Adrenal gland (tissue), 19 donors: ENCODE measurements at regions of chr7 and their contacts with region 1.

Region 1: GRCh38 chr7:35985126-35985754 is 167.8 kb upstream of the EEPD1 start:
- DNase-seq: peak; percentile 78 to 92 (median 88)
- H3K4me3 ChIP-seq: no peak overlapping the region
- H3K27ac ChIP-seq: no peak overlapping the region
- H3K4me1 ChIP-seq: no peaks in the 10 kb centered on the region
- H3K27me3 ChIP-seq: no peaks in the 10 kb centered on the region
- CTCF ChIP-seq: peak; percentile 84 to 99 (median 98)
- POLR2A ChIP-seq: no peak

Region 2: GRCh38 chr7:36037121-36037662 is 52.0 kb after region 1 on chr7:
- intact Hi-C with region 1: no loop called
- DNase-seq: peak; percentile 68 to 90 (median 86)
- H3K4me3 ChIP-seq: peak overlapping the region in 1 of 4 donors; percentile 15
- H3K27ac ChIP-seq: peak overlapping the region; percentile 58 to 88 (median 78)
- H3K4me1 ChIP-seq: peaks cover 11 to 23% of the 10 kb centered on the region in 2 donors
- H3K27me3 ChIP-seq: no peaks in the 10 kb centered on the region
- CTCF ChIP-seq: no peak
- POLR2A ChIP-seq: peak in 1 of 2 donors; percentile 21

Region 3: DNA sequence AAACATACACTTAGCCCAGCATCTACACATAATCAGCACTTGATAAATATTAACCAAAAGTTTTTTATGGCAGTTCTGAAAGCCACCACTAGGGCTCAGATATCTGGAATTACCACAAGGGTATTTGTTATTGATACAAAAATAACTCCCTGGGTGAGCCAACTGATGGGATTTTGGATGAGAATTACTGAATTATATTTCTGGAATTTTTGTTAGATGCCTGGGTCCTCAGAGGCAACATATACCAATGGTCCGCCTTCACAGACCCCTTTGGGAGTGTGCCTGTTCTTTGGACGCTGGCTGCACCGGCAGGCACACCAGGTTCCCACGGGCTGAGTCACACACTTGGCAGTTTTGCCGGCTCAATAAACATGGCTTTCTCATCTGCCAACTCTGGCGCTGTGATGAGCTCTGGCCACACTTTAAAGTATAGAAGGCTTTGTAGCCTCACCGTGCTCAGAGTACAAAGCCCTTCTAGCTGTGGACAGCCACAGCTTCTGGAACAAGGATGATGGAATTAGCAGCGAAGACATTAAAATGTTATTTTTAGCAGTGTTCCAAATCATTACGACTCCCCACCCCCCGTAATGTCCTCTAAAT is 143.3 kb after region 1 on chr7:
- intact Hi-C with region 1: loop called in 1 of 2 experiments (anchors 10 kb)
- DNase-seq: peak; percentile 75 to 89 (median 87)
- H3K4me3 ChIP-seq: peak overlapping the region in 1 of 4 donors; percentile 30
- H3K27ac ChIP-seq: peak overlapping the region in 2 of 5 donors; percentile 40 to 72
- H3K4me1 ChIP-seq: peaks cover 0 to 9% of the 10 kb centered on the region in 2 donors
- H3K27me3 ChIP-seq: no peaks in the 10 kb centered on the region
- CTCF ChIP-seq: peak; percentile 62 to 85 (median 82)
- POLR2A ChIP-seq: no peak

Region 4: GRCh38 chr7:36291387-36292316 is 306.4 kb after region 1 on chr7:
- intact Hi-C with region 1: loop called (anchors 2 kb)
- DNase-seq: peak; percentile 82 to 94 (median 88)
- H3K4me3 ChIP-seq: peak overlapping the region in 2 of 4 donors; percentile 11 to 46
- H3K27ac ChIP-seq: peak overlapping the region in 4 of 5 donors; percentile 84 to 94 (median 88)
- H3K4me1 ChIP-seq: peaks cover 11 to 20% of the 10 kb centered on the region in 2 donors
- H3K27me3 ChIP-seq: no peaks in the 10 kb centered on the region
- CTCF ChIP-seq: peak; percentile 96 to 99 (median 98)
- POLR2A ChIP-seq: peak in 1 of 2 donors; percentile 62

Region 5: DNA sequence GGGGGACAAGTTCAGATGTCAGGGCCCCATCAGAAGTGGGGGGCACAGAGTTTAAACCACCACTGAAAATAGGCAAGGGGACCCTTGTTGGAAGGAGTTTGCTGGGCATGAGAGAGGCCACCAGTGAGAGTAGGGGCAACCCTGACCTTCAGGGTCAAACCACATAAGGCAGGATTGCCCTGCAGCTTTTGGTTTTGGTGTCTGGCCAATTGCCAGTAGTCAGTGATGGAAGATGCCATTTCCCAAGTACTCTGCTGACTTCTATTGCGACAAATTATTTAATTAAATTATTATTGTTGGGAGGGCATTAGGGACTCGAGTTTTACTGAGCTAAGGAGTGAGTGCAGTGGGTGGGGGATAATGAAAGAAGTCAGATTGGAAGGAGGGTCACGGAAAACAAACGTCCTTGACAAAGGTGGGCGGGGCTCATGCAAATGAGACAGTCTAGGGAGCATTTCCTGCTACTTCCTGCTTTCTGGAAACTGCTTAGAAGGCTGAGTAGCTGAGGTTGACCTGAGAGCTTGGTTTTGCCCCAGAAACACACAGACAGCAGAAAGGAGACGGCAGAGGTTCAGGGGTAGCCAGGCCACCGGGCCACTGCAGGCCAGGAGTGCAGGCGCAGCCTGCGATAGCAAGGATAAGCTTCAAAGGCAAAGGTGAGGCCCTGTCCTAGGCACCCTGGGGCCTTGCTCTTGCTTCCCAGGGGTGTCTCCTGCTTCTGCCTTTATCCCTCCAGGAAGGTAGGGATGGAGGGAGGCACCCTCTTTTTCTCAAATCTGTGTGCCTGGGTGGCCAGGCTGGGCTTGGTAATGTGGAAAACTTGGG is 330.3 kb after region 1 on chr7:
- intact Hi-C with region 1: loop called in 1 of 2 experiments (anchors 2 kb)
- DNase-seq: peak in 2 of 7 donors; percentile 18 to 24
- H3K4me3 ChIP-seq: no peak overlapping the region
- H3K27ac ChIP-seq: no peak overlapping the region
- H3K4me1 ChIP-seq: no peaks in the 10 kb centered on the region
- H3K27me3 ChIP-seq: no peaks in the 10 kb centered on the region
- CTCF ChIP-seq: no peak
- POLR2A ChIP-seq: no peak

Region 6: GRCh38 chr7:36514289-36515243 is 529.3 kb after region 1 on chr7:
- intact Hi-C with region 1: no loop called
- DNase-seq: peak in 1 of 7 donors; percentile 37
- H3K4me3 ChIP-seq: no peak overlapping the region
- H3K27ac ChIP-seq: no peak overlapping the region
- H3K4me1 ChIP-seq: no peaks in the 10 kb centered on the region
- H3K27me3 ChIP-seq: no peaks in the 10 kb centered on the region
- CTCF ChIP-seq: no peak
- POLR2A ChIP-seq: no peak